T-cell (primary cell): ENCODE measurements at regions of chr1 and their contacts with region 1.

Region 1: GRCh38 chr1:219927956-219928790 is at the start of gene SLC30A10:
- DNase-seq: no peak
- ATAC-seq: peak in 1 of 4 experiments; percentile 20
- H3K4me3 ChIP-seq: peak within 1 kb of the TSS in 1 of 2 donors; percentile 38
- H3K4me3 Mint-ChIP-seq: peak within 1 kb of the TSS; percentile 49 to 71 (median 57)
- H3K27ac ChIP-seq: no peak within 1 kb of the TSS
- H3K27ac Mint-ChIP-seq: no peak within 1 kb of the TSS
- H3K4me1 ChIP-seq: peaks cover 0 to 8% of the 10 kb centered on the region in 2 experiments
- H3K4me1 Mint-ChIP-seq: peaks cover 7 to 11% (median 10%) of the 10 kb centered on the region in 3 donors
- H3K27me3 ChIP-seq: peaks cover 4 to 32% of the 10 kb centered on the region in 2 experiments
- H3K27me3 Mint-ChIP-seq: peaks cover 33 to 39% of the 10 kb centered on the region in 2 donors
- total RNA-seq, gene SLC30A10: 0.06 to 0.09 TPM in 2 of 5 donors, not detected in the others

Region 2: DNA sequence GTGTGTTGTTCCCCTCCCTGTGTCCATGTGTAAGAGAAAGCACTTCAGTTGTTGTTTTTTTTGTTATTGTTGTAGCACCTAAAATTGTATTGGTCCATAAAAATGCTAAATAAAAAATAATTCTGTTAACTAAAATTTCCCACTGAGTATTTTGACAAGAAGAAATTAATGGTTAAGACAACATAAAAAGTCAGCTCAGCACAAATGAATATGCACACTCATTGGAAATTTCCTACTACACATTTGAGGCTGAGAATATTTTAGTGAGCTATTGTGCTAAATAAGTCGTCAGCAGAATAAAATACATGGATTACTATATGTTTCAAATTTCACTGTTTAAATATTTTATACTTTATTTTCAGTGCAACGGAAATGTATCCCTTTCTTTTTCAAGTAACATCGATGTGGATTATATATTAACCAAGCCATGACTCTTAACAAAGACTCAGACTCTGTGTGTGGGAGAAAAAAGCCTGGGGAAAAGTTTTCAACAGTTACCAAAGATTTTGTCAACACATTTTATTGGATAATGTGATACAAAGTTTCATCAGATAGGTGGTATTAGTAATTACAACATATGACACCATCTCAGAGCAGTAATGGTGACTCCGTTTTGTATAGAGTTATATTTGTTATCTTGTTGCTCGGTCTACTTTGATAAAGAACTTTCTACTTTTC is 691.1 kb before region 1 on chr1:
- CTCF ChIA-PET with region 1: interaction called in 1 of 2 experiments, 13 read pairs
- POLR2A ChIA-PET with region 1: no interaction called
- DNase-seq: no peak
- ATAC-seq: no peak
- H3K4me3 ChIP-seq: no peak overlapping the region
- H3K4me3 Mint-ChIP-seq: no peak overlapping the region
- H3K27ac ChIP-seq: no peak overlapping the region
- H3K27ac Mint-ChIP-seq: no peak overlapping the region
- H3K4me1 ChIP-seq: no peaks in the 10 kb centered on the region
- H3K4me1 Mint-ChIP-seq: no peaks in the 10 kb centered on the region
- H3K27me3 ChIP-seq: no peaks in the 10 kb centered on the region
- H3K27me3 Mint-ChIP-seq: no peaks in the 10 kb centered on the region

Region 3: GRCh38 chr1:219442611-219443061 is 485.5 kb before region 1 on chr1:
- CTCF ChIA-PET with region 1: no interaction called
- POLR2A ChIA-PET with region 1: no interaction called
- DNase-seq: no peak
- ATAC-seq: no peak
- H3K4me3 ChIP-seq: no peak overlapping the region
- H3K4me3 Mint-ChIP-seq: no peak overlapping the region
- H3K27ac ChIP-seq: no peak overlapping the region
- H3K27ac Mint-ChIP-seq: no peak overlapping the region
- H3K4me1 ChIP-seq: no peaks in the 10 kb centered on the region
- H3K4me1 Mint-ChIP-seq: no peaks in the 10 kb centered on the region
- H3K27me3 ChIP-seq: no peaks in the 10 kb centered on the region
- H3K27me3 Mint-ChIP-seq: no peaks in the 10 kb centered on the region